Ascending aorta (tissue), 2 donors: ENCODE measurements at regions of chr3 and their contacts with region 1.

Region 1: GRCh38 chr3:25648107-25648535 is 16.6 kb downstream of the TOP2B start:
- DNase-seq: peak in 1 of 2 donors; percentile 84
- H3K4me3 ChIP-seq: no peak overlapping the region
- H3K27ac ChIP-seq: no peak overlapping the region
- H3K4me1 ChIP-seq: peaks cover 0 to 9% of the 10 kb centered on the region in 2 donors
- H3K27me3 ChIP-seq: no peaks in the 10 kb centered on the region
- CTCF ChIP-seq: peak; percentile 66 to 86 (median 79)

Region 2: GRCh38 chr3:25674670-25675069 is 26.5 kb after region 1 on chr3:
- intact Hi-C with region 1: no loop called
- DNase-seq: no peak
- H3K4me3 ChIP-seq: no peak overlapping the region
- H3K27ac ChIP-seq: no peak overlapping the region
- H3K4me1 ChIP-seq: no peaks in the 10 kb centered on the region
- H3K27me3 ChIP-seq: no peaks in the 10 kb centered on the region
- CTCF ChIP-seq: no peak

Region 3: DNA sequence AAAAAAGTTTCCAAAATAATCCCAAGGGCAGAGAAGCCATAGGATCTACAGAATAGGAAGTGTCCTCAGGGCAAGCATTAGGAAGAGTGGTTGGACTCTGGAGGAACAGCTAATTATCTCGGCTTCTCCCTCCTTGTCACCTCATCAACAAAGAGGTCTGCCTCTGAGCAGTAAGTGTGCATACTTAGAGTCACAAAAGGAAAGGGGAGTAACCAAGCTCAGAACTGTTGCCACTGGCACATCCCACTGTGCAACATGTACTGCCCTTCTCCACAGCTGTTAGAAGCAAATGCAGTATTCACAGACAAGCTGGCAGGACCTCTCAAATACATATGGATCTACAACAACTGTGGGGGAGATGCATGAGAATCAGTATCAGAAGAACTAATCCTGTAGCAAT is 103.6 kb after region 1 on chr3:
- intact Hi-C with region 1: loop called (anchors 10 kb)
- DNase-seq: no peak
- H3K4me3 ChIP-seq: no peak overlapping the region
- H3K27ac ChIP-seq: no peak overlapping the region
- H3K4me1 ChIP-seq: no peaks in the 10 kb centered on the region
- H3K27me3 ChIP-seq: no peaks in the 10 kb centered on the region
- CTCF ChIP-seq: no peak

Region 4: DNA sequence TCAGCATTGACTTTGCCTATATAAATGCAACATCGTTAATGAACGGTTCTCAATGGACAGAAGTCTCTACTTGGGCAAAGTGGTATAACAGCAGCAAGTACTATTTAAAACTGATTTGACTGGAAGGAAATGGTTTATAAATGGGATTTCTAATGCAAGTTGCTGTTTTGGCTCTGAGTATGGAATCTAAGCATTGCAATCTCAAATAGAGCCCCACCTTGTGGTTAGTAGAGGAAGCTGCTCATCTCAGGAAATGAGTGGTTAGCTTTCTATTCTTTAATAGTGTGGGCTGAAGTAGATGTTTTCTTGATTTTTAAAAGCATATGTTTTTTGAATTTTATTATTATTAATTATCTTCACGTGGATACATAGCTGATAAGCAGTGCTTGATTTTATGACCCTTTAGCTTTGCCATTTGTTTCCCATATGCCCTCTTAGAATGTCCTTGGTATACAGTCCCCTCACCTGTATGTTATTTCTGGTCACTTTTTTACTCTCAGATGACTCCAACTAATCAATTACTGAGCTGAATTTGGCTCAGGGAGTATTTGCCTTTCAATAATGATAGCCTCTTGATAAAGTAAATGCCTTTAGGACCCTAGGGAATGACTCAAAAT is 208.9 kb after region 1 on chr3:
- intact Hi-C with region 1: loop called (anchors 5 kb)
- DNase-seq: no peak
- H3K4me3 ChIP-seq: no peak overlapping the region
- H3K27ac ChIP-seq: no peak overlapping the region
- H3K4me1 ChIP-seq: no peaks in the 10 kb centered on the region
- H3K27me3 ChIP-seq: no peaks in the 10 kb centered on the region
- CTCF ChIP-seq: peak; percentile 24 to 49 (median 27)

Region 5: DNA sequence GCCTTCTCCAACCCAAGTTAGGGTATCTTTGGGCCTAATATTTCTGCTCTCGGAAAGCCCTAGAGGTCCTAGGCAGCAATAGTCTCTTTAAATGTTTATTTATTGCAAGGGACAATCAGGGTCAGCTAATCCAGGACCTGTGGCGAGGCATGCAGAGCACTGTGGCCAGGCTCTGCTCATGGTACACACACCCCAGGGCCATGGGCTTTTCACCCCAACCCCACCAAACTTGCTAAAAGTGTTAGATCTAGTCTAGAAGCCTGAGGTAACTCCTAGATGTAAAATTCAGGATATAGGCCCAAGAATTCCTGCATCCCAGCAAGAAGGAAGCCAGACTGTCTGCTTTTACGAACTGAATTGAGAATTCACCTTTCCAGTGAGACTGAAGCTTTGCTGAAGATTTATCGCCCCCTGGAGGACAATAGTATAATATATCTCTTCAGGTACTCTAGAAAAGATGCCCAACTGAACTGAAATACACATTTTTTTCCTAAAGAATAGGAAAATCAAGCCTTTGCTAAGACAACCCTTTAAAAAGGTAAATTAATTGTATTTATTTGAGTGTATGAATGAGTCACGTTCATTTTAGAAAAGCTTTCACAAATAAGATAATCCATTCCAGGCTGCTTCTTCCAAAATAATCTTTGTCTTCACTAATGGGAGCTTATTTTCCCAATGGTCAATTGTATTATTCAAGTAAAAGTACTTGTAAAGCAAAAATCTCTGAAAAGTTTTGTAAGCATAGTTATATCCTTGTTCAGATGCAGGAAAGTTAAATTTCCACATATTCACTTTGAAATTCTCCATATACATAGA is 1064.3 kb after region 1 on chr3:
- intact Hi-C with region 1: loop called (anchors 5 kb)
- DNase-seq: no peak
- H3K4me3 ChIP-seq: no peak overlapping the region
- H3K27ac ChIP-seq: no peak overlapping the region
- H3K4me1 ChIP-seq: no peaks in the 10 kb centered on the region
- H3K27me3 ChIP-seq: no peaks in the 10 kb centered on the region
- CTCF ChIP-seq: peak; percentile 12 to 62 (median 62)